Sciatic nerve (tissue), 2 donors: ENCODE measurements at regions of chr1 and their contacts with region 1.

Region 1: GRCh38 chr1:234610348-234611152 is 572 bp upstream of the IRF2BP2 start:
- DNase-seq: peak; percentile 98
- ATAC-seq: peak; percentile 68

Region 2: GRCh38 chr1:233828480-233828879 is 782.1 kb before region 1 on chr1:
- intact Hi-C with region 1: no loop called
- DNase-seq: no peak
- ATAC-seq: no peak

Region 3: DNA sequence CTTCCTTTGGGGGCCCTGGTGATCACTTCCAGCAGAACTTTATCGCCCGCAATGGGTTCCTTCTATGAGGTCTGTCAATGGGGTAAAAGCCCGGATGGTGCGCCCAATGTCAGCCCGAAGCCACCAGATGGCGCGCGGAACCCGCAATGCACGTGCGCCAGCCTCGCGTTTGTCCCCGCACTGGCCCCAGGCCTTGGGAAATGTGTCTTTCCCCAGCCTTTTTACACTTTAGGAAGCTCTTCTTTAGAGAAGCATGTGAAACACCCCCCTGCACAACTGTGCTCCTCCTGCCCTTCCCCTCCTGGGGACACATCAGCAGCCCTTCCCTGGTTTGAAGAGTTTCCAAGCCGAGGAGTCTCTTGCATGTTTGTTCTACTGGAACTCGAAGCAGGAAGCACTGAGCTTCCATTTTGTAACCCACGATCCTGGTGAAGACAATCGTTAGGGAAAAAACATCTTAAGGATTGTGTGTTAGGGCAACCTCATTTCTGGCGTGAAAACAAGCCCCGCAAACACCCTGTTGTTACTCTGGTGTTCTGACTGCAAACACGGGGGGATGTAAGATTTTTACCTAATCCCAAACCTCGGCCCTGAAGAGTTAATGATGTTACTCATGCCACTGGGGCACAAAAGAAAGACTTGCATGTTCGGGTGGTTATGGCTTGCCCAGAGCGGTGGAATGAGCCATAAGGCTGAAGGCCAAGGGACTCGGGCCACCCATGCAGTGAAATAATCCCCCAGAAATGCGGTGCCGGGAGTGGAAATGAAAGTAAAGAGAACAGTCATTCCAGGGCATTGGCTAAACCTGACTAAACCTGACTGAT is 111.2 kb before region 1 on chr1:
- intact Hi-C with region 1: loop called (anchors 2 kb)
- DNase-seq: peak; percentile 97
- ATAC-seq: peak; percentile 97

Region 4: DNA sequence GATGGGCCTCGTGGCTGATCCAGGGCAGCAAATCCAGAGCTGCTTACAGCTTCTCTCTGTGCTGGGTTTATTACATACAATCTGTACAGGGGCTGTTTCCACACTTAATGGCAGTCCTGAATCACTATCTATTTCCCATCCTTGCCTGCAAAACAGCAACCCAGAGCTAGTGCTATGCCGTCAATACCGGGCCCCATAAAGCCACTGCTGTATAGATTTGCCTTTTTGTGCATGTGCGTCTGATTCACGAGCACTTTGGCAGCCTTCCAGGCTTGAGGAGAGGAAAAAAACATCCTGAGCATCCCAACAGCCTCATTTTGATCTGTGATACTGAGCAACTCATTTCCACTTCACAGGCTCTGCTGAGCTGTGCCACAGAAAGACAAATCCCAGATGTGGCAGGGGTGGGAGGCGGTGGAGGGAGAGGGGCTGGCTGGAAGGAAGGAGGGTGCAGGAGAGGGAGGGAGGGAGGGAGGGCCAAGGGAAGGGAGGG is 66.4 kb before region 1 on chr1:
- intact Hi-C with region 1: no loop called
- DNase-seq: peak; percentile 85
- ATAC-seq: peak; percentile 81

Region 5: DNA sequence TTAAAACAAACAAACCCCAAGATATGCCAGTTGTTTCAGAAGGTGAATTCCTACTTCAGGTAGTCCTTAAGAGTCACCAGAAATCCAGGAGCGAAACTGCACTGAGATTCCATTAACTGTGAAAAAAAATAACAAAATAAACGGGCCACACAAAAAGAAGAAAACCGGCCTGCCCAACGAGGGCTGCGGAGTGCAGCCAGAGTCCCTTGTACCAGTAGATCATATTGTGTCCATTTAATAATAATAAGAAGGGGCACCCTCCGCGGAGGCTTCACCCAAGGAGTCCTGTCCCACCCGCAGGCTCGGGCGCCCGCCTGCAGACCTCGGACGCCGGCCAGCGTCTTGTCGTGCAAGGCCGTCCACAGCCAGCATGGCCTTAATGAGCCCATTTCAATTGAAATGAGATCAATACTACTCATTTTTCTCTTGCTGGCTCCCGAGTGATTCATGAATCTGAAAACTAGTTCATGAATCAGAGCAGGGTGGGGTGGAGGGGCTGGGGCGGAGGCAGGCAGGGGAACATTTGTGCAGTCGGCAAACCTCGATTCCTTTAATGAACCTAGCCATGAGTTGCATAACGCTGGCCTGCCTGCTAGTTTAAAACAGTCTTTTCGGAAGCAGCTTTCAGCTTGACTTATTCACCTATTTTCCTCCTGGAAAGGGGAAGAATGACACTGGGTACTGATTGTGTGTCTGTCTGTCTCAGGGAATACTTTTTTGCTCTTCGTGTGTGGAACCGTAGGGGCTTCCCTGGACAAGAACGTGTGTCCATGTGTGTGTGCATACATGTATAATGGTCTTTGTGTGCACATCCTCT is 112.6 kb after region 1 on chr1:
- intact Hi-C with region 1: loop called (anchors 5 kb)
- DNase-seq: peak; percentile 78
- ATAC-seq: peak; percentile 43

Region 6: DNA sequence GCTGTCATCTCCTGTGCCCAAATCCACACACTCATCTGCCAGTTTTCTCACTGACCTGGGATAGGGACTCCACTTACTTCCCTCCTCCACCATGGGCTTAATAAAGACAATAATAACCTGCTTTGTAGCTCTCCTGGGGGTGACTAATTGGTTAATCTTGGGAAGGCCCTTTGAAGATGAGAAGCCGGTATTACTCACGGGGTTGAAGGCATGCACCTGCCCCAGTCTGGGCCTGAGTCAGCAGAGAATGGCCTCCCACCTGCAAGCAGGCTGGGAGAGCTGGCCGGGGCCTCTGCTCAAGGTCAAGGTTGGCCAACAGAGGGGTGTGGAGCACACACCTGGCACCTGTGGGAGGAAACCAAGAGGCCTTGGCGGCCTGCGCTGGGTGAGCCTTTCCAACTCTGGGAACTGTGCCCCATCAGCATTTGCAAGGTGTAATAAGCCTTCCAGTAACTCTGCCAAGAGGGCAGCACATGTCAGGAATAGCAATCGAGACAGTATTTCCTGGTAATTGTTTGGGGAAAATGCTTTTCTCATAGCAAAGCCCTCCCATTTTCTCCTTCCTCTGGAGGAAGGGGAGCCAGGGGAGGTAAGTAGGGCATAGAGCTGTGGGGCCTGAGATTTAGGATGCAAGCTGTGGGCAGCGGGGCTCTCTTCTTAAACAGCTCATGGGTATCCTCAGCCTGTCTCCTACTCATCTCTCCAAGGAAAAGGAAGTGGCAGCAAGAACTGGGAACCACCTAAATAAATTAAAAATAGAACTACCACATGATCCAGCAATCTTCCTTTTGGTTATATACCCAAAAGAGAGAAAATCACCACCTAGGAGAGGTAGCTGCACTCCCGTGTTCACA is 469.1 kb after region 1 on chr1:
- intact Hi-C with region 1: loop called (anchors 5 kb)
- DNase-seq: no peak
- ATAC-seq: no peak

Region 7: GRCh38 chr1:235720544-235720943 is 1110.0 kb after region 1 on chr1:
- intact Hi-C with region 1: no loop called
- DNase-seq: no peak
- ATAC-seq: no peak